ENCODE measurements at regions of chr3 and their contacts with region 1.

Region 1: DNA sequence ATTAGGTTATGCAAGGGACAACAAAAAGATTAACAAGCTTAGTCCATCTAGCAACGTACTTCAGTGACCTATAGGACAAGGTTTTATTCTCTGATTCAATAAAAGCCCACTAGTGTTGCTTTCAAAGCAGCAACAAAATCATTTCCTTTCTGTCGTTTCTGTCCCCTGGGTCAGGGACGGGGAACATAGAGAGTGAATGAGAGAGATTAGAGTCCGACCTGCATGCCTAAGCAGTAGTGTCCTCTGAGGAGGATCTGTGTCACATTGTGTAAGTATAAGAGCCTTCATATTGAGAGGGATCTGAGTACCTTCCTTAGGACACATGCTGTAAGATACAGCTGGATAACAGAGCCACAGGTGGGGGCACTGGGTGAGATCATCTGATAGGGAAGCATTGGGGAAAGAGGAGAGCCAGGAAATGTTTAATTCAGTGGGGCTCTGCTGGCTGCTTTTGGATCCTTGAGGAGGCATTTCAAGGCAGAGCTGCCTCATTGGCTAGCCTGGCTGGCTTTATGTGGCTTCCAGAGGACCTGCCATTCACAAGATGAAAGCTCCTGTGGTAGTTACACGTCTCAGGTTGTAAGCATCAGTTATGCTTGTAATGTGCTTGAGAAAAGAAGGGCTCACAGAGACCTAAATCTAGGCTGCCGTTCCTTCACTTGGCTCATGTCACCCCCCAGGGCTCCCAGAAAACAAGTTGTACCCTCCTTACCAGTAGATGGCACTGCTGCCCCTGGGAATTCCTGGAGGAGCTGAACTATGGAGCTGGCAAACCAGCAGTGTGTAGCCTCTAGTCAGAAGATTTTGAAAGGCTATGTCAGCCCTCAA is 2.7 kb downstream of the TMEM108 start:
- DNase-seq: peak; percentile 67
- ATAC-seq: peak; percentile 55
- H3K4me3 Mint-ChIP-seq: no peak overlapping the region
- H3K27ac Mint-ChIP-seq: no peak overlapping the region
- H3K4me1 Mint-ChIP-seq: no peaks in the 10 kb centered on the region
- H3K27me3 Mint-ChIP-seq: peaks cover 41% of the 10 kb centered on the region

Region 2: DNA sequence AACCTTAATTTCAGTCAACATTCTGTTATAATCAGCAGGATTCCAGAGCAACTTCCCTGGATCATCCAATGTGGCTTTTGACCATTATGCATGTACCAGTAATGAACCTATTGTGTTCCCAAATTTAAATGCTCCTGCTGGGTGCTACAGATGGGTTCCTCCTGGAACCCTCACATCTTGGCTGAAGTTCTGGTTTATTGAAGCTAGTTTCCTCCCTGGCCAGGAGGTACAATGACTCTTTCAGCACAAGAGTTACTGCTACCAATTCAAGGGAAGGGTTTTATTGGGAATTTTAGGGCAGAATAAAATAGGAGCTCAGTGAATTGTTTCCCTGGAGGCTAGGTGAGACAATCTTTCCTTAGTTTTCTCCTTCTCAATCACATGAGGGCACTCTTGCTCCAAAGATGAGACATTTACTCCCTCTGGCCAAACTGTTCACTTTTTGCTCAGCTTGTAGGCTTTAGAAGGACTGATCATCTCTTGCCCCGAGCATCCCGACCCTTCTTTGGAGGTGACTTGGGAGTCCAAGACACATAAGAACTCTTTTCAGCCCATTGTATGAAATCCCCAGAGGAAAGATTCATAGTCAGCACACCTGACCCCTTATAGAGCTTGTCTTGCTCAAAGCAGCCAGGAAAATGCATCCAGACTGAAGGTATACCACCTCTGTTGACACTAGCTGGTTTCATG is 309.9 kb before region 1 on chr3:
- CTCF ChIA-PET with region 1: no interaction called
- POLR2A ChIA-PET with region 1: no interaction called
- intact Hi-C with region 1: loop called (anchors 5 to 10 kb)
- DNase-seq: no peak
- ATAC-seq: peak; percentile 58
- H3K4me3 Mint-ChIP-seq: no peak overlapping the region
- H3K27ac Mint-ChIP-seq: no peak overlapping the region
- H3K4me1 Mint-ChIP-seq: no peaks in the 10 kb centered on the region
- H3K27me3 Mint-ChIP-seq: peaks cover 18% of the 10 kb centered on the region

Region 3: GRCh38 chr3:133377396-133377795 is 336.5 kb after region 1 on chr3:
- CTCF ChIA-PET with region 1: no interaction called
- POLR2A ChIA-PET with region 1: no interaction called
- intact Hi-C with region 1: loop called (anchors 2 to 5 kb)
- DNase-seq: no peak
- ATAC-seq: no peak
- H3K4me3 Mint-ChIP-seq: no peak overlapping the region
- H3K27ac Mint-ChIP-seq: no peak overlapping the region
- H3K4me1 Mint-ChIP-seq: no peaks in the 10 kb centered on the region
- H3K27me3 Mint-ChIP-seq: peaks cover 3% of the 10 kb centered on the region

Region 4: DNA sequence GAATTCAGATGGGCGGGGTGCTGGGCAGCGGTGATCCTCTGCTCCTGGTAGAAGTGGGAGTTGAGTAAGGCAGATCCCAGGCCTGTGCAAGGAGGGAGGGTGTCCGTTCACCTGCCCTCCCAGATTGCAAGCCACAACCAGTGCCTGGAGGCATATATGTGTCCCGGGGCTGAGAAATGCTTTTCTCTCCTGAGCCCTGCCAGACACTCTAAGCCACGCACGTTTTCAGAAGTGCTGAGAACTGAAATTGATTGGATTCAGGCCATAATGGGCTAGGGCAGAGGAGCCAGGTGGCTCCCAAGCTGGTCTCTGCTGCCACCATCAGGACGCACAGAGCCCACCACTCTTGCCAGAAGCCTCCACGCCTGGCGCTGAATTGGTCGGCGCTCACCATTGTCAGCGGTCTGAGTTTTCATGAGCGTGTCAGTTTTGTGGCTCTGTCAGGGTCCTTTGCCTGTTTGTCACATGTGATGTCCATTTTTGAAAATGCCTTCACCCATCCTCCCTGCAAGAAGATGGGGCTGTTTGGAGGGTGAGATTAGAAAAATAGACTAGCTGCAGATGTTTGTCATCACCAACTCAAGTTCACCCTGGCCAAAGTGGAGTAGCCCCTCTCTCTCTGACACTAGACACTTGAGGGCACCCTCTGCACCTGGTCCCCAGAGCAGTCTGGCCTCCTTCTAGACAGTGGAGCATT is 343.6 kb after region 1 on chr3:
- CTCF ChIA-PET with region 1: no interaction called
- POLR2A ChIA-PET with region 1: no interaction called
- intact Hi-C with region 1: loop called (anchors 1 to 5 kb)
- DNase-seq: peak; percentile 71
- ATAC-seq: peak; percentile 83
- H3K4me3 Mint-ChIP-seq: no peak overlapping the region
- H3K27ac Mint-ChIP-seq: no peak overlapping the region
- H3K4me1 Mint-ChIP-seq: no peaks in the 10 kb centered on the region
- H3K27me3 Mint-ChIP-seq: peaks cover 3% of the 10 kb centered on the region

Region 5: DNA sequence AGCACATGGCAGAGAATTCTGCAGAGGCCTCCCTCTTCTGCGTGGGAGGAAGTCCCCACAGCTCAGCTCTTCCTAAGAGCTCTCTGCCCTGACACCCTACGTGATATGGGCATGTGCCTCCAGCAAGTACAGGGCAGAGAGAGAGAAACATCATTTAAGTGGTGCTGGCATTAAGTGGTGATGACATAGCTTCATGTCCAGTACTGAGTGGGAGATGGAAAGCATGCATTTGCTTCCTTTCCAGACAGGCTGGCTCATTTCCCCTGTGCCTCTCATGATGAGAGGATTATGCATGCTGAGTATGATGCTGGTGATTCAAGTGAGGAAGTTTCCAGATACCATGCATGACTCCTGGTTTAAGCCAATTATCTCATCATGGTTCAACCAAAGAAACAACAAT is 385.8 kb after region 1 on chr3:
- CTCF ChIA-PET with region 1: interaction called, 9 read pairs
- POLR2A ChIA-PET with region 1: interaction called, 3 read pairs
- intact Hi-C with region 1: loop called (anchors 1 kb)
- DNase-seq: no peak
- ATAC-seq: peak; percentile 68
- H3K4me3 Mint-ChIP-seq: no peak overlapping the region
- H3K27ac Mint-ChIP-seq: no peak overlapping the region
- H3K4me1 Mint-ChIP-seq: peaks cover 6% of the 10 kb centered on the region
- H3K27me3 Mint-ChIP-seq: no peaks in the 10 kb centered on the region

Measured in activated CD4-positive, alpha-beta T cell treated with anti-CD3 and anti-CD28 coated beads for 36 hours (primary cell).